HCT116 (cell line): ENCODE measurements at regions of chr13 and their contacts with region 1.

Region 1: DNA sequence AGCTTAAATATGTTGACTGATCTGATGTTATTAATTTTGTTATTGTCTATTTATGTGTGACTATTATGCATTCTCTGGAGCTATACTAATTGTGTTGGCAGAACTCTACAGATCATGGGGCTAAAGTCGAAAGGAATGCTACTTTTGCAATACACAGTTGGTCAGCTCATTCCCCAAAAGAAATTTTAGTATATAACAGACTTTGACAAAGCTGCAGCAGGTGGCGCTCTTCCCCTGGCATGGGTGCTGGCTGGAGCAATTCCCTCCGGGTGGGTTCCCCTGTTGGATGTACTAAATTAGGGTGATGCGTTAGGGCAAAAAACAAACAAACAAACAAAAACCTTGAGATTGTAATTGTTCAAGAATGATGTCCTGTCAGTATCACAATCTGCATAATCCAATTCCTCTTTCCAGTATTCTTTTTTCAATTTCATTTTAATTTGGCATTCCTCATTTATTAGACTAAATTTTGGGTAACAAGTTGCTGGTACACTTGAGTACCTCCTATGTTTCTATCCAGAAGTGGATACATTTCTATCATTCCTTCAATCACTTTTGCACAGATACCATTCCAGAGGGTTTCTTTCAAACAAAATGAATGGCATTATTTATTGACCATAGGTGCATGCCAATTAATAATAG is 322.8 kb upstream of the EDNRB start:
- DNase-seq: no peak
- ATAC-seq: 0 out of 2 replicates have a peak, but pooled peaks have one; percentile 38
- H3K4me3 ChIP-seq: no peak overlapping the region
- H3K27ac ChIP-seq: no peak overlapping the region
- H3K4me1 ChIP-seq: no peaks in the 10 kb centered on the region
- H3K27me3 ChIP-seq: no peaks in the 10 kb centered on the region
- CTCF ChIP-seq: peak in 2 of 3 experiments; percentile 42 to 59; a peak in 3 of 6 replicates
- POLR2A ChIP-seq: no peak
- RAD21 ChIP-seq: peak; percentile 56

Region 2: DNA sequence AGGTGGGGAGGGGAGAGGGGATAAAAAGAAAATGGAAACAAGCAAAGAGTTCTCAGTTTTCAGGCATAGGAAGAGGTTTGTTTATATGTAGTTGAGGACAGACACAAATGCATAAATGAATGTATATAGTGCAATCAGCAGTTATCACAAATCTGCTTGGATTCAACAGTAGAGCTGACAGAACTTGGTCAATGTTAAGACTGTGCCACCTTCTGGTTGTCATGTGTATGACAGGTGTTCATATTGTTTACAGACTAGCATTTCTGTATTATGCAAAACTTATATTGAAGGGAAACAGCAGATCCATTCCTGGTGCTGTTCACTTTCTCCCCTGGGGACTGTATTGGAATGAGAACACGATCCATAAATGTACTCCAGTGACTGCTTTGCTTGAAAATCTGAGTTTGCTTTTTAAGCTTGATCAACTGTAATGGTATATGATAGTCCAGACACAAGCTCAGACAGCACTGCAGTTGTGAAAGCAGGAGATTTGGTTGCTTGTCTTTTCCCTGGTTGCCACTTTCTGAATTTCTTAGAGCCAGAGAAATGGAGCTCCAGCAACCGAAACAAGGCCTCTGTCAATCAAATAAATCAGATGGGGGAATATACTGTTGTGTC is 737.1 kb after region 1 on chr13:
- CTCF ChIA-PET with region 1: interaction called, 14 read pairs
- POLR2A ChIA-PET with region 1: no interaction called
- RAD21 ChIA-PET with region 1: no interaction called
- intact Hi-C with region 1: loop called (anchors 1 kb)
- DNase-seq: peak; percentile 48
- ATAC-seq: peak; percentile 84
- H3K4me3 ChIP-seq: no peak overlapping the region
- H3K27ac ChIP-seq: no peak overlapping the region
- H3K4me1 ChIP-seq: no peaks in the 10 kb centered on the region
- H3K27me3 ChIP-seq: peaks cover 4% of the 10 kb centered on the region
- CTCF ChIP-seq: peak; percentile 34 to 65 (median 52); a peak in 5 of 6 replicates
- POLR2A ChIP-seq: no peak
- RAD21 ChIP-seq: peak; percentile 56

Region 3: DNA sequence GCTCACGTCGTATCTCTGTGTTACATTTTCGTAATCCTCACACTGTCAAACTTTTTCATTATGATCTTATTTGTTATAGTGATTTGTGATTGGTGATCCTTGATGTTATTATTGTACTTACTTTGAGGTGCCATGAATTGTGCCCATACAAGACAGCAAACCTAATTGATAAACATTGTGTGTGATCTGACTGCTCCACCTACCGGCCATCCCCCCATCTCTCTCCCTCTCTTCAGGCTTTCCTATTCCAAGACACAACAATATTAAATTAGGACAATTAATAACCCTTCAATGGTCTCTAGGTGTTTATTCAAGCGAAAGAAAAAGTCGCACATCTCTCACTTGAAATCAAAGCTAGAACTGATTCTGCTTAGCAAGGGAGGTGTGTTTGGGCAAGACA is 815.3 kb after region 1 on chr13:
- CTCF ChIA-PET with region 1: no interaction called
- POLR2A ChIA-PET with region 1: no interaction called
- RAD21 ChIA-PET with region 1: no interaction called
- intact Hi-C with region 1: loop called (anchors 5 kb)
- DNase-seq: no peak
- ATAC-seq: no peak
- H3K4me3 ChIP-seq: no peak overlapping the region
- H3K27ac ChIP-seq: no peak overlapping the region
- H3K4me1 ChIP-seq: no peaks in the 10 kb centered on the region
- H3K27me3 ChIP-seq: peaks cover 6% of the 10 kb centered on the region; the same call in 1 of the 2 replicates
- CTCF ChIP-seq: peak; percentile 6 to 52 (median 51); a peak in 4 of 6 replicates
- POLR2A ChIP-seq: no peak
- RAD21 ChIP-seq: peak; percentile 34; the same call in 1 of the 2 replicates

Region 4: GRCh38 chr13:79079351-79080105 is 838.1 kb after region 1 on chr13:
- CTCF ChIA-PET with region 1: no interaction called
- POLR2A ChIA-PET with region 1: no interaction called
- RAD21 ChIA-PET with region 1: no interaction called
- intact Hi-C with region 1: no loop called
- DNase-seq: no peak
- ATAC-seq: no peak
- H3K4me3 ChIP-seq: no peak overlapping the region
- H3K27ac ChIP-seq: no peak overlapping the region
- H3K4me1 ChIP-seq: no peaks in the 10 kb centered on the region; a peak in 1 of 4 replicates
- H3K27me3 ChIP-seq: no peaks in the 10 kb centered on the region
- CTCF ChIP-seq: no peak
- POLR2A ChIP-seq: no peak
- RAD21 ChIP-seq: no peak